KBM-7 (cell line): ENCODE measurements at regions of chr16 and their contacts with region 1.

Region 1: GRCh38 chr16:27929818-27930217 is 133.7 kb downstream of the GSG1L start:
- DNase-seq: no peak

Region 2: DNA sequence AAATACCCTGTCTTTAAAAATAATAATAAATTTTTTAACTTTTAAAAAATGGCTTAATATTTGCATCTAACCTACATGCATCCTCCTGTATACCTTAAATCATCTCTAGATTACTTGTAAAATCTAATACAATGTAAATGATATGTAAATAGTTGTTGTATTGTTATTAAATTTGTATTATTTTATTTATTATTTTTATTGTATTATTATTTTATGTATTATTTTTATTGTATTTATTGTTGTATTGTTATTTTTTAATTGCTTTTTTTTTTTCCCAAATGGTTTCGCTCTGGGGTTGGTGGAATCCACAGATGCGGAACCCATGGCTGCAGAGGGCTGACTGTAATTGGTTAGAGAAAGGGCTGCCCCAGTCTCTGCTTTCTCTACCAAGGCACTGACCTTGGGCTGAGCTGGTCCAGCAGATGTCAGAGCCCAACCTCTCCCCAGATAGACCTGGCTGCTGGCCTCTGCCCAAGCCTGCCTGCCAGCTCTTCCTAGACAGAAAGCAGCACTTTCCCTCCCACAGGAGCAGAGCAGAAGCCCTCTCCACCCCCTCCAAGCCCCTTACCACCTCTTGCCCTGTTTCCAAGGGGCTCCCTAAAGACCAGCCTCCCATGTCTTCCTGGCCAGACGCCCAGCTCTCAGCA is 50.1 kb before region 1 on chr16:
- in situ Hi-C with region 1: loop called (anchors 10 kb)
- DNase-seq: no peak

Region 3: DNA sequence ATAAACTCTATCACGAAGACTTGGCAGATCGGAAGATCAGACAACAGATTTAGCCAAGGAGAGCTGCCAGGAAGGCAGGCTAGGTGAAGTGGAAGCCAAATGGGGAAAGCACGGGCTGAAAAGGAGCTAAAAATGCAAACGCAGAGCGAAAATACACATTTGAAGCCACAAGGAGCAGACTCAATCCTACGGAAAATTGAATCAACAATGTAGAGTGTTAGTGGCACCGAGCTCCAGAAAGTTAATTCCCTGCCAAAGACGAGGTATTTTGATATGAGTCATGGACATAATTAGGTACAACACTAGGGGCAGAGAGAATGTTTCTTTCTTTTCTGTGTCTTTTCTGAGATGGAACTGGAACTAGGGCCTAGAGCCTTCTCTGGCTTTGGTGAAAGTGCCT is 113.0 kb after region 1 on chr16:
- in situ Hi-C with region 1: no loop called
- DNase-seq: no peak